Heart left ventricle (tissue), 16 donors: ENCODE measurements at regions of chr15 and their contacts with region 1.

Region 1: DNA sequence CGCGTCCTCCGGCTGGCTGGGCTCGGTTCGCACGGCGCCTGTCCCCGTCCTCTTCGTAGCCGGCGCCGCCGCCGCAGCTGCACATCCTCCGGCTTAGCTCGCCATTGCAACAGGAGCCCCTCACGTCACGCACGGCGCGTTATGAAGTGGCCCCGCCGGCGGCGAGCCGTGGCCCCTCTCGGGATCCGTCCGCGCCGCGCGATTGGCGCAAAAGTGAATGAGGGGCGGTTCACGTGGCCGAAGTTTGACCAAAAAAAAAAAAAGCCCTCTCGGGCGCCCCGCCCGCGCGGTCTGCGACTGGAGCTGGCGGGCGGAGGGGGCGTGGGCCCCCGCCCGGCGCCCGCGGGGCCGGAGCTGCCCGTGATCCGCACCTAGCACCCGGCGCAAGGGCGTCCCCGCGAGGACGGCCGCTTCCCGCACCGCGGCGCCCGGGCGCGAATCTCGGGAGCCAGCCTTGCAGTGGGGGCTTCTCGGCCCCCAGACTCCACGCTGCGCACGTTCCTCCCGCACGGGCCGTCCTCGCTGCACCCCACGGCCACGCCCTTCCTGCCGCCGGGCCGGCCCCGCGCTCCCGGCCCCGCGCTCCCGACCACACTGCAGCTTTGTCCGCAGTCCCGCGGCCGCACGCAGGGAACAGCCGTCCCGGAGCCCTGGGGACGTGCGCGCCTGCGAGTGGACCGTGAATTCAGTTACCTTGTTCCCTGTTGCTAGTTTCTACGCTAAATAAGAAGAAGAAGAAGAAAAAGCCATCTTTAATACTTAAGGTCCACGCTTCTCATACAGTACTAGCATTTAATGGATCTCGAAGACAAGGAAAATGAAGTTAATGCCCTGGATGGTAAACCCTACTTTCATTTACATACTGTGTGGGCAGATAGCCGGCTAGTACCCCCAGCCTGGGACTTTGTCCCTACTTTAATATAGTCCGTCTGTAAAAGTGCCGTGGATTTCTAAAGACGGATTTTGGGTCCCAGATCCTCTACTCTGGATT is at the start of gene CHSY1:
- DNase-seq: peak; percentile 94 to 96 (median 96)
- ATAC-seq: peak; percentile 83 to 90 (median 90)
- H3K4me3 ChIP-seq: peak within 1 kb of the TSS; percentile 64 to 99 (median 86)
- H3K27ac ChIP-seq: peak within 1 kb of the TSS; percentile 87 to 97 (median 90)
- H3K4me1 ChIP-seq: peaks cover 0 to 63% (median 45%) of the 10 kb centered on the region in 12 donors
- H3K27me3 ChIP-seq: no peaks in the 10 kb centered on the region
- CTCF ChIP-seq: peak in 8 of 12 donors; percentile 21 to 53 (median 39)
- POLR2A ChIP-seq: peak; percentile 18 to 88
- total RNA-seq, gene CHSY1: 8.7 to 41.3 (median 11.1) TPM

Region 2: DNA sequence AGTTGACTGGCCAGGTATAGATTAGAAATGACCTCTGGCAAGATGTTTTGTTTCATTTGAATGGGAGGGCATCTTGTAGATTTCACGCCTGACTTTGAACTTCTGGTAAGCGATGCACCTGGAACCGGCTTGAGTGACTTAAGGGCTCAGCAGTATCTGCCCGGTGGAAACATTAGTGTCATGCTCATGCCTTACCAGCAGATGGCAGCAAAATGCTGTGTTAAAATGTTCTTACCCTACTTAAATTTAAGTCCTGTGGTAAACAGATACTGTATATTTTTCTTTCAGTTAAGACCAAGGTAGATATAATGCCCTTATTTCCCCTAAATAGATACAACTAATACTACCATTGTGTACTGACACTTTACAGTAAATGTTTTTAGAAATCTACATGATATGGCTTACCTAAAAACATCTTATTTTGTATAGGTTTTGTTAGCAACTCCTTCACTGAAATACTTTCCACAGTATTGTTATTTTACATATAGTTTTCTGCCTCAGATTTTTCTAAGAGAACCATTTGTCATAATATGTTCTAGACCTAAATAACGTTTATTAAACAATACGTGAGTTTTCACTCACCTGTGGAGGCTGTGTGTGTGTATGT is 624.2 kb before region 1 on chr15:
- intact Hi-C with region 1: loop called in 2 of 10 experiments (anchors 10 kb)
- DNase-seq: peak in 4 of 5 donors; percentile 33 to 60 (median 38)
- ATAC-seq: peak; percentile 56 to 87 (median 76)
- H3K4me3 ChIP-seq: no peak overlapping the region
- H3K27ac ChIP-seq: no peak overlapping the region
- H3K4me1 ChIP-seq: peaks cover 0 to 16% (median 0%) of the 10 kb centered on the region in 12 donors
- H3K27me3 ChIP-seq: no peaks in the 10 kb centered on the region
- CTCF ChIP-seq: peak; percentile 76 to 92 (median 84)
- POLR2A ChIP-seq: no peak

Region 3: GRCh38 chr15:101070502-101071273 is 181.4 kb before region 1 on chr15:
- intact Hi-C with region 1: no loop called
- DNase-seq: peak in 2 of 5 donors; percentile 16 to 43
- ATAC-seq: peak; percentile 52 to 90 (median 76)
- H3K4me3 ChIP-seq: no peak overlapping the region
- H3K27ac ChIP-seq: peak overlapping the region; percentile 40 to 77 (median 64)
- H3K4me1 ChIP-seq: peaks cover 0 to 36% (median 14%) of the 10 kb centered on the region in 12 donors
- H3K27me3 ChIP-seq: no peaks in the 10 kb centered on the region
- CTCF ChIP-seq: no peak
- POLR2A ChIP-seq: no peak

Region 4: DNA sequence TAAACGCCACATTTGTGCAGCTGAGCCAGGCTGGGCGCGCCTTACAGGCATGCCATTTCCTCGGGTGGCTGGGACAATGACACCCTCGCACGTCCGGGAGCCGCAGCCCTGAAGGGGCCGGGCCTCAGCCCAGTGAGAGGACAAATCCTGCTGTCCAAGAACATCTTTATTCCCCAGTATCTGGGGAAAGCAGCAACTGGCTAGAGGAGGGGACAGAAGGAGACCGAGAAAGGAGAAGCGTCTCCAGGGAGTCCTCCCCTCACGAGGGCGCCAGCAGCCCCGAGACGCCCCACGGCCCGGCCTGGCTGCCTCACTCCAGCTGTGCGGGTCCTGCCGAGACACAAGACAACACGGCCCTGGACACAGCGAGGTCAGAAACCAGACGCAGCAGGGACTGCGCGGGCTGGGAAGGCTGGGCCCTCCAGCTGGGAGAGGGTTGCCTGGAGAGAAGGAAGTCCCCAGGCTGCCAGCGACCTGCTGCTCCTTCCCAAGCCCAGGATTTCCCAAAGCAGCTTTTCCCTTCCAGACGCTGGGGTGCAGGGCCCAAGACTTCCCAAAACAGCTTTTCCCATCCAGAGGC is 130.5 kb before region 1 on chr15:
- intact Hi-C with region 1: loop called in 8 of 10 experiments (anchors 1 to 10 kb)
- DNase-seq: peak; percentile 85 to 94 (median 89)
- ATAC-seq: peak; percentile 88 to 94 (median 92)
- H3K4me3 ChIP-seq: peak overlapping the region in 11 of 12 donors; percentile 11 to 56 (median 33)
- H3K27ac ChIP-seq: peak overlapping the region; percentile 21 to 97 (median 68)
- H3K4me1 ChIP-seq: peaks cover 0 to 63% (median 14%) of the 10 kb centered on the region in 12 donors
- H3K27me3 ChIP-seq: no peaks in the 10 kb centered on the region
- CTCF ChIP-seq: peak in 10 of 12 donors; percentile 16 to 60 (median 40)
- POLR2A ChIP-seq: no peak

Region 5: GRCh38 chr15:101167753-101168463 is 84.2 kb before region 1 on chr15:
- intact Hi-C with region 1: loop called in 3 of 10 experiments (anchors 5 to 10 kb)
- DNase-seq: peak; percentile 77 to 88 (median 83)
- ATAC-seq: peak; percentile 75 to 84 (median 81)
- H3K4me3 ChIP-seq: peak overlapping the region in 6 of 12 donors; percentile 6 to 31 (median 15)
- H3K27ac ChIP-seq: peak overlapping the region; percentile 79 to 99 (median 85)
- H3K4me1 ChIP-seq: peaks cover 0 to 70% (median 23%) of the 10 kb centered on the region in 12 donors
- H3K27me3 ChIP-seq: no peaks in the 10 kb centered on the region
- CTCF ChIP-seq: peak in 1 of 12 donors; percentile 14
- POLR2A ChIP-seq: no peak

Region 6: DNA sequence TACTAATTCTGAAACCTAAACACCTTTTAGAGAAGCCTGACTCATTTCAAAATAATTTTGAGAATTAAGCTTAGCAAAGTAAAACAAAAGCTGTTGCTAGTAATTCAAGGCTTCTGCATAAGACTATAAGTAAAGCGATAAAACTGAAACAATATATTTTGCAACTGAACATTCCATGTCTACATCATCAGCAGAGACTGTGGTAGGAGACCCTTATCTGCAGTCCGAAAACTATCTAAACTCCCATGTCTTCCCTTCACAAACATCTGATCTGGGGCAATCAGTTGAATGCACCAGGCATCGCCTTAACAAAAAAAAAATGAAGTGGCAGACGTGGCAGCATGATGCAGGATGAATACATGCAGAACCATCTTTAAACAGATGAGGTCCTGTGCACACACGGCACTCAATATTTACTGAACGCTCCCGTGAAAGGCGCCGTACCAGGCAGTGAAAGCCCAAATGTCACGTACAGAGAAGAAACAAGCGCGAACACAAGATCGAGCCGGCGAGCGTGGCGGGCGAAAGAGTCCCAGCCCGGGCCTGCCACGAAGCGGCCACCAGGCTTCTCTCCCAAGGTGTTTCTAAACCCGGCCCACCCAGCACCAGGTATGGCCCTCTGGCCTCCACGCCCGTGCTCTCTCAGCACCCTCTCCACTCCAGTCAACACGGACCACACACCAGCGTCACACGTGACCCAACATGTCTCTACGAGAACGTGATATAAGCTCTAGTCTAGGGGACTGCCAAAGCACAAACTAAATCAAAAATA is 63.3 kb before region 1 on chr15:
- intact Hi-C with region 1: loop called in 6 of 10 experiments (anchors 5 to 10 kb)
- DNase-seq: peak in 1 of 5 donors; percentile 42
- ATAC-seq: peak in 3 of 4 donors; percentile 14 to 36 (median 30)
- H3K4me3 ChIP-seq: peak overlapping the region in 10 of 12 donors; percentile 4 to 56 (median 43)
- H3K27ac ChIP-seq: peak overlapping the region; percentile 63 to 93 (median 82)
- H3K4me1 ChIP-seq: peaks cover 0 to 96% (median 50%) of the 10 kb centered on the region in 12 donors
- H3K27me3 ChIP-seq: no peaks in the 10 kb centered on the region
- CTCF ChIP-seq: no peak
- POLR2A ChIP-seq: no peak